ENCODE measurements at regions of chr10 and their contacts with region 1.

Region 1: GRCh38 chr10:110414563-110415309 is 83.0 kb upstream of the DUSP5 start:
- DNase-seq: peak; percentile 72
- ATAC-seq: peak; percentile 89
- H3K4me3 Mint-ChIP-seq: peak overlapping the region; percentile 50
- H3K27ac Mint-ChIP-seq: peak overlapping the region; percentile 65
- H3K4me1 Mint-ChIP-seq: peaks cover 71% of the 10 kb centered on the region
- H3K27me3 Mint-ChIP-seq: peaks cover 6% of the 10 kb centered on the region
- CTCF ChIP-seq: no peak

Region 2: DNA sequence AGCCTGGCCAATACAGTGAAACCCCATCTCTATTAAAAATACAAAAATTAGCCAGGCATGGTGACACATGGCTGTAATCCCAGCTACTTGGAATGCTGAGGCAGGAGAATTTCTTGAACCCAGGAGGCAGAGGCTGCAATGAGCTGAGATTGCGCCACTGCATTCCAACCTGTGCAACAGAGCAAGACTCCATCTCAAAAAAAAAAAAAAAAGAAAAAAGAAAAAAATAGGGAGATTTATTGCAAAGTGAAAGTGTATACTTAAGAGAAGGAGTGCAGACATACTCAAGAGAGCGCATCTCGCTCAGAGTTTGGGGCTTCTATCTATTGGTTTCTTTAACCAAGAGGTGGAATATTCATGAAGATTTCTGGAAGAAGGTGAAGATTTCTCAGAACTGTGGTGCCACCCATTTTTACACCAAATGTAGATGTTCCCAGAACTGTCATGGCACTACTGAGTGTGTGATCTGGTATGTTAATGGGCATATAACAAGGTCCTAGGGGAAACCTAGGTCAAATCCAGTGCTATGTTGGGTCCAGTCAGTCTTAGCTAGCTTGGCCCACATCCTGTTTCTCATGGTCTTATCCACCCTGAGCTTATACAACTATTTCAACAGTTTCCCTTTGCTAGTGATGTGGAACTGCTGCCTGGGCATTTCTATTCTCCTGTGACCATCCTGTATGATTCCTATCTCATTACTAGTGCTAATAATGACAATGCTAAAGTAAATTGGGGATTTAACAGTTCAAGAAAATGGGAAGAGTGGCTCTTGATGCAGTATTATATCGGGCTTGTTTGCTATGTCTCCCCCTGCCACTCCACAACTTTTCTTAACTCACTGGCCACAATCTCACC is 1199.6 kb before region 1 on chr10:
- CTCF ChIA-PET with region 1: no interaction called
- POLR2A ChIA-PET with region 1: no interaction called
- intact Hi-C with region 1: no loop called
- DNase-seq: no peak
- ATAC-seq: no peak
- H3K4me3 Mint-ChIP-seq: no peak overlapping the region
- H3K27ac Mint-ChIP-seq: no peak overlapping the region
- H3K4me1 Mint-ChIP-seq: no peaks in the 10 kb centered on the region
- H3K27me3 Mint-ChIP-seq: no peaks in the 10 kb centered on the region
- CTCF ChIP-seq: no peak

Region 3: GRCh38 chr10:109633846-109634245 is 780.9 kb before region 1 on chr10:
- CTCF ChIA-PET with region 1: no interaction called
- POLR2A ChIA-PET with region 1: no interaction called
- intact Hi-C with region 1: no loop called
- DNase-seq: no peak
- ATAC-seq: no peak
- H3K4me3 Mint-ChIP-seq: no peak overlapping the region
- H3K27ac Mint-ChIP-seq: no peak overlapping the region
- H3K4me1 Mint-ChIP-seq: no peaks in the 10 kb centered on the region
- H3K27me3 Mint-ChIP-seq: no peaks in the 10 kb centered on the region
- CTCF ChIP-seq: no peak

Region 4: GRCh38 chr10:110210674-110211464 is 203.9 kb before region 1 on chr10:
- CTCF ChIA-PET with region 1: no interaction called
- POLR2A ChIA-PET with region 1: no interaction called
- intact Hi-C with region 1: loop called (anchors 2 kb)
- DNase-seq: peak; percentile 84
- ATAC-seq: peak; percentile 73
- H3K4me3 Mint-ChIP-seq: peak overlapping the region; percentile 87
- H3K27ac Mint-ChIP-seq: peak overlapping the region; percentile 79
- H3K4me1 Mint-ChIP-seq: peaks cover 55% of the 10 kb centered on the region
- H3K27me3 Mint-ChIP-seq: peaks cover 2% of the 10 kb centered on the region
- CTCF ChIP-seq: no peak

Region 5: GRCh38 chr10:110344622-110345021 is 70.1 kb before region 1 on chr10:
- CTCF ChIA-PET with region 1: no interaction called
- POLR2A ChIA-PET with region 1: interaction called, 12 read pairs
- intact Hi-C with region 1: no loop called
- DNase-seq: no peak
- ATAC-seq: no peak
- H3K4me3 Mint-ChIP-seq: no peak overlapping the region
- H3K27ac Mint-ChIP-seq: no peak overlapping the region
- H3K4me1 Mint-ChIP-seq: peaks cover 29% of the 10 kb centered on the region
- H3K27me3 Mint-ChIP-seq: peaks cover 12% of the 10 kb centered on the region
- CTCF ChIP-seq: no peak

Region 6: GRCh38 chr10:110395725-110396651 is 18.7 kb before region 1 on chr10:
- CTCF ChIA-PET with region 1: no interaction called
- POLR2A ChIA-PET with region 1: interaction called, 6 read pairs
- intact Hi-C with region 1: loop called (anchors 1 kb)
- DNase-seq: no peak
- ATAC-seq: peak; percentile 72
- H3K4me3 Mint-ChIP-seq: no peak overlapping the region
- H3K27ac Mint-ChIP-seq: no peak overlapping the region
- H3K4me1 Mint-ChIP-seq: peaks cover 10% of the 10 kb centered on the region
- H3K27me3 Mint-ChIP-seq: peaks cover 11% of the 10 kb centered on the region
- CTCF ChIP-seq: no peak

Region 7: DNA sequence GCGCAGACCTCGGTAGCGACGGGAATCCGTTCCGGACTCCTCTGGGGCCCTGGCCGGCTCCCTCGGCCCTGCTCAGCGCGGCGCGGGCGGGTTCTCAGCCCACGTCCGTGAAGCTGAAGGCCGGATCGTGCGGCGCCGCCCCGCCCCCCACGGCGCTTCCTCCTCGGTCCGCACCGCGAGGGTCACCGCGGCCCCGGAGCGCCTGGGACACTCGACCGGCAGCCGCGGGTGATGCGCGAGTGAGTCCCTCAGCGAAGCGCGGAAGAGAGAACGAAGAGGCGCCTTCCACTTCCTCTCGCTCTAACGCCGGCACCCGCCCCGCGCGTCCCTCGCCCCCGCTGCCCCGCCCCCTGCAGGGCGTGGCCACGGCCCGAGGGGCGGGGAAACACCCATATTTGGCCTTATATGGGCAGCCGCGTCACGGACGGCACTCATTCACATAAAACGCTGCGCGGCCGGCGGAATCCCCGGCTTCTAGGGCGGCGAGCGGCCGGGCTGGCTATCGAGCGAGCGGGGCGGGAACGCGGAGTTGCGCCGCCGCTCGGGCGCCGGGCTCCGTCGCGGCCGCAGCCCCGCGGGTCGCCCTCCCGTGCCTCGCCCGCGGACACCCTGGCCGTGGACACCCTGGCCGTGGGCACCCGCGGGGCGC is 82.8 kb after region 1 on chr10 and contains the start of gene DUSP5:
- CTCF ChIA-PET with region 1: interaction called, 5 read pairs
- POLR2A ChIA-PET with region 1: interaction called, 81 read pairs
- intact Hi-C with region 1: loop called (anchors 1 kb)
- DNase-seq: peak; percentile 99
- ATAC-seq: peak; percentile 87
- H3K4me3 Mint-ChIP-seq: peak within 1 kb of the TSS; percentile 90
- H3K27ac Mint-ChIP-seq: peak within 1 kb of the TSS; percentile 77
- H3K4me1 Mint-ChIP-seq: peaks cover 66% of the 10 kb centered on the region
- H3K27me3 Mint-ChIP-seq: peaks cover 3% of the 10 kb centered on the region
- CTCF ChIP-seq: no peak
- total RNA-seq, gene DUSP5: 26.1 and 28.6 TPM in 2 replicates

Region 8: GRCh38 chr10:110547139-110547761 is 132.5 kb after region 1 on chr10:
- CTCF ChIA-PET with region 1: interaction called, 5 read pairs
- POLR2A ChIA-PET with region 1: interaction called, 7 read pairs
- intact Hi-C with region 1: loop called (anchors 1 kb)
- DNase-seq: no peak
- ATAC-seq: peak; percentile 67
- H3K4me3 Mint-ChIP-seq: no peak overlapping the region
- H3K27ac Mint-ChIP-seq: no peak overlapping the region
- H3K4me1 Mint-ChIP-seq: peaks cover 6% of the 10 kb centered on the region
- H3K27me3 Mint-ChIP-seq: peaks cover 10% of the 10 kb centered on the region
- CTCF ChIP-seq: no peak